Colonic mucosa (tissue), 4 donors: ENCODE measurements at regions of chr1 and their contacts with region 1.

Region 1: DNA sequence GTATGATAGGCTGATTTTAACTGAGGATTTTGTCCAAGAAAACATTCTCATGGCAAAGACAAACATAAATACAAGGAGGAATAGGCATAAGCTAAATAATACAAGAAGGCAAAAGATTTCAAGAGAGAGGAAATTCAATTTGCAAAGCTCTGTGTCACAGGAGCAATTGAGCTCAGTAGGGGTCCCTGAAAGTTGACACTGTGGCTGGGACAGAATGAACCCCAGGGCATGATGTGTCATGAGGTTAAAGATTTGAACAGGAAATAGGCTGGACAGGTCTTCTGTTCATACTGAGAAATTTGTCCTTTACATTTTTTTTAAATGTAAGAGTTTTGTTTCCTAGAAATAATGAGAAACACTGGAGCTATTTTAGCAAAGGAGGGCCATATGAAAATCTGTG is 555.4 kb upstream of the NEGR1 start:
- DNase-seq: no peak
- H3K4me3 ChIP-seq: no peak overlapping the region
- H3K27ac ChIP-seq: no peak overlapping the region
- H3K4me1 ChIP-seq: no peaks in the 10 kb centered on the region
- H3K27me3 ChIP-seq: no peaks in the 10 kb centered on the region
- CTCF ChIP-seq: no peak

Region 2: DNA sequence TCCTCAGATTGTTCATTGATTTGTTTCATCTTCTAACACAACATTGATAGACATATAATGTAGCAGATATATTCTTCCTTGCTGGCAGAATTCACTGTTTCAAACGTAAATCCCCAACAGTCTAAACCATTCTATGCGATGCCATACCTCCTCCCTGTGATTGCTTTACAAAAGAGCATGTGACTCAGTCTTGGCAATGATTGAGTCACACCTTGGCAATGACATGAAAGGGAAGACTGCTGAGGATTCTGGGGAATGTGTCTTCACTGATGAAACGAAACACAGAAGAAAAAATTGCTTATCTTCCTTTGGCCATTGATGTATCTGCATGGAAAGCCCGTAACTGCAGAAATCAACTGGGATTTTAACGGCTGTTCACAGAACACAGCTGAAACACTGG is 1347.3 kb before region 1 on chr1:
- intact Hi-C with region 1: loop called (anchors 5 kb)
- DNase-seq: no peak
- H3K4me3 ChIP-seq: no peak overlapping the region
- H3K27ac ChIP-seq: no peak overlapping the region
- H3K4me1 ChIP-seq: no peaks in the 10 kb centered on the region
- H3K27me3 ChIP-seq: no peaks in the 10 kb centered on the region
- CTCF ChIP-seq: no peak

Region 3: DNA sequence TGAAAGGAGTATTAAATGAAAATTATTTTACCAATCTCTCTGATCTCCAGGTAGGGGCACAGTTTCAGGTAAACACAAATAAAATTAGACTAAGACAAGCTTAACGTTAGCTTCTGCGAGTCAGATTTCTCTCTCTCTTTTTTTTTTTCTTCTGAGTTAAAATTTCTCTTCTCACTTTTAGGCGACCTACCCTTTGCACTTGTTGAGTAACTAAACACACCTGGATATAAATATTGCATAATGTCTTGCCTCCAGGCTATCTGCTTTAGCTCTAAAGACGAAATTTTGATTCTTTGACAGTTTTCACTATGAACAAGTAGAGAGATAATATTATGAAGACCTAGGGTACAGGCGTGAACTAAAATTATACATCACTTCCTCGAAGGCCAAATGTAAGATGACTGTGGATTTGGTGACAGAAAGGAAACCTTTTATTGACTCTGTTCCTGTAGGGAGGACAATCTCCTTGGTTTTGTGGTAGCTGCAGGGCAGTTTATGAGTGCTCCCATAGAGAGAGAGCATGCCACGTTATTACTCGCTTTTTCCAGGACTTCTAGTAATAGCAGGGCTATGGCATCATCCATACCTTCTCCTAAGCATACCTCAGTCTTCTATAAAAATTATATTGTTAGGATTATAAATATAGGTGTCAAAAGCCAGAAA is 251.6 kb before region 1 on chr1:
- intact Hi-C with region 1: no loop called
- DNase-seq: no peak
- H3K4me3 ChIP-seq: no peak overlapping the region
- H3K27ac ChIP-seq: no peak overlapping the region
- H3K4me1 ChIP-seq: no peaks in the 10 kb centered on the region
- H3K27me3 ChIP-seq: no peaks in the 10 kb centered on the region
- CTCF ChIP-seq: no peak

Region 4: DNA sequence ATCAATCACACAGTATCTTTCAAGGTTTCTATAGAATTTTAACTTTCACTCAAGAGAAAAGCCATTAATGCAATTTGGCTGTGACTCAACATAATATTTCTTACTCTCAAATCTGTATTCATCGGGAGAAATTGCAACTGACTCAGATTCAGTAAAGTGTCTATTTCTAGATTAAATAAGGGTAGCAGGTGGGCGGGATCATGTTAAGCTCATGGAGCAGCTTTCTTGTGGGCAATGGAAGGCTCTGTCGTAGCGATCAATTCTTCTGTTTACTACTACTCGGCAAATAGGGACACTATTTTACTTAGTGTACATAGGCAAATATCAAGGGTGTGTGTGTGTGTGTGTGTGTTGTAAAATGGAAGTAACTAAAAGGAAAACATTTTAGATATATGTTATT is 131.9 kb before region 1 on chr1:
- intact Hi-C with region 1: no loop called
- DNase-seq: no peak
- H3K4me3 ChIP-seq: no peak overlapping the region
- H3K27ac ChIP-seq: no peak overlapping the region
- H3K4me1 ChIP-seq: no peaks in the 10 kb centered on the region
- H3K27me3 ChIP-seq: no peaks in the 10 kb centered on the region
- CTCF ChIP-seq: no peak

Region 5: DNA sequence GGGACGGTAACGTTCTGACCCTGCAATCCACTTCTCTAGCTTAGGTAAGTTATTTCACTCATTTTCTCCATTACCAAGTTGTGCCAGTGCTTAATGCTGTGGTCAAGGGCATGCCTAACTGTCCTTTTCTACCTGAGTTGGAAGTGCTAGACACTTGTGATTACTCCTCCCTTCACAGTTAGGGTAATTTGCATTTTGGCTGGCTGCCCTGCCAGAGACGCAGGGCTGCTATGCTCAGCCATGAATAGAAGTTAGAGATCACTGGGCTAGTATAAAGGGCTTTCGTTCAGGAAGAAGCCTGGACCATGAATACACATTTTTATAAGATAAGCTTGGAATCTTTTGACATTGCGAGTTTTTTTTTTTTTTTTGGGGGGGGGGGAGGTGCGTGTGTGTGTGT is 77.8 kb after region 1 on chr1:
- intact Hi-C with region 1: no loop called
- DNase-seq: no peak
- H3K4me3 ChIP-seq: no peak overlapping the region
- H3K27ac ChIP-seq: no peak overlapping the region
- H3K4me1 ChIP-seq: no peaks in the 10 kb centered on the region
- H3K27me3 ChIP-seq: no peaks in the 10 kb centered on the region
- CTCF ChIP-seq: no peak